ENCODE measurements at regions of chr2 and their contacts with region 1.

Region 1: DNA sequence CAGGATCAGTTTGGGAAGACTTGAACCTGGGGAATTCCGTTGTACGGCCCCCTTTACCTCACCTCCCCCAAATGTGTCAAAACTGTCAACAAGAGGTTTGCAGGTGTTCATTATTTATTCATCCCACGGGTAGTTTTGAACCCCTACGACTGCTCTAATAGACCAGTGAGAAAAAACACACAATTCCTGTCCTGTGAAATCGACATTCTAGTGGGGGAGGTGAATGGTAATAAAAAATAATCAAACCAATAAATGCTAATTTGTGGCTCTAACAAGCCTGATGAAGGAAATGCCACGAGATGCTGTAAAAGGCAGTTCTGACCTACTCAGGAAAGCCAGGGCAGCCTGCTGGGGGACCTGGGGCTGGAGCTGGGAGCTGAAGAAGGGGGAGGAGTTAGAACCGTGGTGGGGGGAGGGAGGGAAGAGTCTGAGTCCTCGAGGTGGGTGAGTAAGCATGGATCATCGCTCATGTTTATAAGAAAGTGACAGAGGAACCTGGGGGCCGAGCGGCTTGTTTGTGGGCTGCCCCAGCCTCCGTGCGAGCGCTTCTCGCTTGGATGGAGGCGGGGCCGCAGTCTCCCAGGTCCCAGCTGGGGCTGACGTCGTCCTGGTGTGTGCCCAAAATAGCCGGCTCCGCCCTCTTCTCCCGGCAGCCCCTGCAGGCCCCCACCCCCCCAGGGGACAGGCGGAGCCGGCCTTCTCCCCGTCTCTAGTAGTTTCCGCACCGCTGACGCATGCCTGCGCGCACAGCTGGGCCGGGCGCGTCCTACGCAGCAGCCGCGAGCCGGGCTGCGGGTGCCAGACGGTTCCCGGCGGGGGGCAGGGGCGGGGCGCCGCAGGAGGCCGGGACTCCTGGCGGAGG is at the start of gene DNAJB2:
- DNase-seq: peak; percentile 97
- H3K4me3 Mint-ChIP-seq: peak within 1 kb of the TSS; percentile 86
- H3K27ac Mint-ChIP-seq: peak within 1 kb of the TSS; percentile 86
- H3K4me1 Mint-ChIP-seq: peaks cover 42% of the 10 kb centered on the region
- H3K27me3 Mint-ChIP-seq: no peaks in the 10 kb centered on the region
- CTCF ChIP-seq: no peak
- total RNA-seq, gene DNAJB2: 58.2 and 59.8 TPM in 2 replicates

Region 2: GRCh38 chr2:219218732-219219701 is 59.9 kb before region 1 on chr2 and contains the start of gene ABCB6:
- CTCF ChIA-PET with region 1: interaction called, 4 read pairs
- POLR2A ChIA-PET with region 1: interaction called, 32 read pairs
- intact Hi-C with region 1: no loop called
- DNase-seq: peak; percentile 91
- H3K4me3 Mint-ChIP-seq: peak within 1 kb of the TSS; percentile 82
- H3K27ac Mint-ChIP-seq: peak within 1 kb of the TSS; percentile 83
- H3K4me1 Mint-ChIP-seq: no peaks in the 10 kb centered on the region
- H3K27me3 Mint-ChIP-seq: no peaks in the 10 kb centered on the region
- CTCF ChIP-seq: no peak
- total RNA-seq, gene ABCB6: 13.8 and 18.8 TPM in 2 replicates

Region 3: GRCh38 chr2:219261024-219261855 is 17.6 kb before region 1 on chr2:
- CTCF ChIA-PET with region 1: interaction called, 24 read pairs
- POLR2A ChIA-PET with region 1: interaction called, 263 read pairs
- intact Hi-C with region 1: no loop called
- DNase-seq: no peak
- H3K4me3 Mint-ChIP-seq: no peak overlapping the region
- H3K27ac Mint-ChIP-seq: no peak overlapping the region
- H3K4me1 Mint-ChIP-seq: no peaks in the 10 kb centered on the region
- H3K27me3 Mint-ChIP-seq: no peaks in the 10 kb centered on the region
- CTCF ChIP-seq: no peak

Region 4: DNA sequence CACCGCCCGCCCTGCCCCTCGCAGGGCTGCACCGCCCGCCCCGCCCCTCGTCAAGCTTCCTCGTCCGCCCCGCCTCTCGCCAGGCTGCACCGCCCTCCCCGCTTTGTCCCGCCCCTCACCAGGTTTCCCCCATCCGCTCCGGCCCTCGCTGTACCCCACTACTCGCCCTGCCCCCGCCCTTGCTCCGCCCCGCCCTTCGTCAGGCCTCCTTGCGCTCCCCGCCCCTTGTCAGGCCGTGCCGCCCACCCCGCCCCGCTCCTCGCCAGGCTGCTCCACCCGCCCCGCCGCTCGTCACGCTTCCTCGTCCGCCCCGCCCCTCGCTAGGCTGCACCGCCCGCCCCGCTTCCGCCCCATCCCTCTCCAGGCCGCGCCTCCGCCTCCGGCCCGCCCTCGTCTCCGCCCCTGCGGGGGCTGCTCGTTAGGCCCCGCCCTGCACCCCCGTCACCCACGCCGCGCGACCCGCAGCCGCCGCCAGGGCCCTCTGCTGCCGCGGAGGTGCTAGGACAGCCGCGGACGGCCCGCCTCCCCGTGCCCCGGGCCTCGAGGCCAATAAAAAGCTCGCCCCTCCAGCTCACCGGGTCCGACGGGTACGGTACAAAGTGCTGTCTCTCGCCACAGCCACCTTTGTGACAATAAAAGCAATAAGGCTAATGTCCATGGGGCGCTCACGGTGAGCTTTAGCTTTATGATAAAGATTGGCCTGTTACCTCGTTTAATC is 109.4 kb after region 1 on chr2:
- CTCF ChIA-PET with region 1: interaction called, 5 read pairs
- POLR2A ChIA-PET with region 1: interaction called, 13 read pairs
- intact Hi-C with region 1: no loop called
- DNase-seq: peak; percentile 87
- H3K4me3 Mint-ChIP-seq: peak overlapping the region; percentile 96
- H3K27ac Mint-ChIP-seq: peak overlapping the region; percentile 97
- H3K4me1 Mint-ChIP-seq: no peaks in the 10 kb centered on the region
- H3K27me3 Mint-ChIP-seq: no peaks in the 10 kb centered on the region
- CTCF ChIP-seq: no peak

Region 5: GRCh38 chr2:219645631-219646527 is 367.0 kb after region 1 on chr2:
- CTCF ChIA-PET with region 1: no interaction called
- POLR2A ChIA-PET with region 1: no interaction called
- intact Hi-C with region 1: no loop called
- DNase-seq: peak; percentile 82
- H3K4me3 Mint-ChIP-seq: peak overlapping the region; percentile 40
- H3K27ac Mint-ChIP-seq: peak overlapping the region; percentile 74
- H3K4me1 Mint-ChIP-seq: peaks cover 12% of the 10 kb centered on the region
- H3K27me3 Mint-ChIP-seq: no peaks in the 10 kb centered on the region
- CTCF ChIP-seq: no peak

Region 6: DNA sequence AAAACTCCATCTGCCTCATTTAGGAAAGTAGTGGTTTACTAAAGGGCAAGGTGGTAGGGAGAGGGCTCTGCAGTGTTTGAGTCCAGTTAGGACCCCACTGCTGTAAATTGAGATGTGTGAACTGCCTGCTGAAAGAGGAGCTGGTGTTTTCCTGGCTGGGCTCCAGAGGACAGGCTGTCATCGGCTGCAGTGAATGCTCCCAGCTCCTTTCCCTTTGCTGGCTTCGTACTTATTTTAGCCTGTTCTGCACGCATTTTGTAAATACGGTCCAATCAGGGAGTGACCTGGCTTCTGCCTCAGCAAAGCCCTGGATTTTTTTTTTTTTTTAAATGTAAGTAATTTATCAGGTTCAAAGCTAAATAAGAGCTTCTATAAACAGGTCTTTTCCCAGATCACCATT is 386.1 kb after region 1 on chr2:
- CTCF ChIA-PET with region 1: no interaction called
- POLR2A ChIA-PET with region 1: no interaction called
- intact Hi-C with region 1: no loop called
- DNase-seq: no peak
- H3K4me3 Mint-ChIP-seq: no peak overlapping the region
- H3K27ac Mint-ChIP-seq: no peak overlapping the region
- H3K4me1 Mint-ChIP-seq: no peaks in the 10 kb centered on the region
- H3K27me3 Mint-ChIP-seq: no peaks in the 10 kb centered on the region
- CTCF ChIP-seq: no peak

Measured in MCF 10A (cell line).